ENCODE measurements at regions of chrX and their contacts with region 1.

Region 1: DNA sequence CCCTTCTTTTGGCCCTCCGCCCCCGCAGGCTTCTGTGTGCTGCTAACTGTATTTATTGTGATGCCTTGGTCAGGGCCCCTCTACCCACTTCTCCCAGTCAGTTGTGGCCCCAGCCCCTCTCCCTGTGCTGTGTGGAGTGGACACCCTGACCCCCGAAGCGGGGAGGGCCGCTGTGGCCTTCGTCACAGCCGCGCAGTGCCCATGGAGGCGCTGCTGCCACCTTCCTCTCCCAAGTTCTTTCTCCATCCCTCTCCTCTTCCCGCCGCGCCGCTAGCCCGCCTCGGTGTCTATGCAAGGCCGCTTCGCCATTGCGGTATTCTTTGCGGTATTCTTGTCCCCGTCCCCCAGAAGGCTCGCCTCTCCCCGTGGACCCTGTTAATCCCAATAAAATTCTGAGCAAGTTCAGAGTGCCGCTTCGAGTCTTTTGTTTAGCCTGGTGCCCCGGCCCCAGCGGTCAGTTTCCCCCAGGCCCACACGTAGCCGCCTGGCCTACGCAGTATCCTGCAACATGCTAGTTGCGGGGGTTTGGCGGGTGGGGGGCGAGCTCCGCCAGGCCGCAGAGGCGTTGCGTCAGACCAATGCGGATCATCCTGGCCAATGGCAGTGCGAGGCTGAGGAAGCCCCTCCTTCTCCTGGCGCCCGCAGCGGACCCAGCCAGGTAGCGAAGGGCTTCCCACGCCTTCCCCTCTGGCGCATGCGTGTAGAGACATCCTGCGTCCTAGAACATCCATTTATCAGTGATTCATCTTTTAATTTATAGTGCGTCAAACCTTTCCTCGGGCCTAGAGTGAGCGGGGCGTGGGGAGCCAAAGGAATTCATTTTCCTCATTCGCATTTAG is 5.6 kb upstream of the KANTR start:
- DNase-seq: peak; percentile 81 to 91 (median 91)
- H3K4me3 ChIP-seq: peak overlapping the region in 6 of 7 experiments; percentile 31 to 84 (median 68)
- H3K27ac ChIP-seq: peak overlapping the region in 1 of 2 experiments; percentile 57
- H3K4me1 ChIP-seq: peaks cover 0 to 13% (median 5%) of the 10 kb centered on the region in 4 experiments
- H3K27me3 ChIP-seq: peaks cover 0 to 31% (median 0%) of the 10 kb centered on the region in 5 experiments

Region 2: GRCh38 chrX:53071604-53072417 is 16.5 kb before region 1 on chrX:
- CTCF ChIA-PET with region 1: interaction called, 52 read pairs
- POLR2A ChIA-PET with region 1: interaction called, 15 read pairs
- DNase-seq: peak; percentile 71 to 86 (median 85)
- H3K4me3 ChIP-seq: peak overlapping the region; percentile 9 to 91 (median 71)
- H3K27ac ChIP-seq: peak overlapping the region in 1 of 2 experiments; percentile 61
- H3K4me1 ChIP-seq: peaks cover 0 to 10% (median 5%) of the 10 kb centered on the region in 4 experiments
- H3K27me3 ChIP-seq: peaks cover 0 to 20% (median 0%) of the 10 kb centered on the region in 5 experiments

Region 3: DNA sequence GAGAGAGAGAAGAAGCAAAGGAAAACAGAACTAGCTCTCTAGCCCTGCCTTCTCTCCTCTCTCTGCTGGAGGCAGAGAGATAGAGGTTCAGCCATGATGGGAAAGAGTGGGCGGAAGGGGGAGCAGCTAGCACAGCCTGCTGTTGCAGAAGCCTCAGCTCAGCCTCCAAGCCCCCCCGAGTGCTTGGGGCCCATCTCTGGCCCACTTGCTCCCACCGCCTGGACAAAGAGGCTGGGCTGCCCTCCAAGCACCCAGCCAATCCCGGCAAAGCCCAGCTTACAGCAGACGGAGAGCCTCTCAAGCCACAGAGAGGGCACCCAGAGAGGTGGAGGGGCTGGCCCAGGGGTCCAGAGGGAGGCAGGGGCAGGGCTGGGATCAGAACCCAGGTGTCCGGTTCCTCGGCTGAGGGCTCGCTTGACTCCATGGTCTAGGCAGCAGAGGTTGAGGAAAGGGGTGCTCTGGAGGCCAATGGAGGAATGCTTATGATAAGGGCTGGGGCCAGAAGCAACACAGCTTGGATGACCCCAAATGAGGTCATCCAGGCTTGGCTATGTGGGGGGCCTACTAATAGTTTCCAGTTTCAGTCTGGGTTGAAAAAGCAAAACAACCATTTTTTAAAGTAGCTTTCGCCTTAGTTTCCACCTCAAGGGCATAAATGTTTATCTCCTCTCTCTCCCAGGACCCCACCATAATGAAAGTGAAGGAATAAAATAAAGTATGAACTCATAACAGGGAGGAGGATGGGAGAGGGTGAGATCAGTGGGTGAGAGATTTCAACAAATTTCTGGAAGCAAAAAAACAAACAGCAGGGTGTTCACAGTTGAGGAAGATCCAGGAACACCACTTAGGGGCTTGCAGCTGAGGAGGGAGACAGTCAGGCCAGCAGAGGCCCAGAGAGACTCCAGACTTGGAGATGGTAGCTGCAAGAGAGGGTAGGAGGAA is 217.9 kb after region 1 on chrX:
- CTCF ChIA-PET with region 1: no interaction called
- POLR2A ChIA-PET with region 1: no interaction called
- DNase-seq: no peak
- H3K4me3 ChIP-seq: no peak overlapping the region
- H3K27ac ChIP-seq: no peak overlapping the region
- H3K4me1 ChIP-seq: no peaks in the 10 kb centered on the region
- H3K27me3 ChIP-seq: peaks cover 0 to 17% (median 0%) of the 10 kb centered on the region in 5 experiments

Measured in common myeloid progenitor, CD34-positive (primary cell).